K562 (cell line): ENCODE measurements at regions of chr6 and their contacts with region 1.

Region 1: GRCh38 chr6:44185953-44186634 is 27.5 kb downstream of the CAPN11 start:
- DNase-seq: peak in 2 of 4 experiments; percentile 22 to 23
- ATAC-seq: peak; percentile 59
- H3K4me3 ChIP-seq: no peak overlapping the region
- H3K27ac ChIP-seq: no peak overlapping the region
- H3K4me1 ChIP-seq: peaks cover 10 to 11% of the 10 kb centered on the region in 2 experiments; a peak in 3 of 5 replicates
- H3K27me3 ChIP-seq: no peaks in the 10 kb centered on the region
- CTCF ChIP-seq: no peak
- EP300 ChIP-seq: no peak
- POLR2A ChIP-seq: no peak
- RAD21 ChIP-seq: no peak

Region 2: DNA sequence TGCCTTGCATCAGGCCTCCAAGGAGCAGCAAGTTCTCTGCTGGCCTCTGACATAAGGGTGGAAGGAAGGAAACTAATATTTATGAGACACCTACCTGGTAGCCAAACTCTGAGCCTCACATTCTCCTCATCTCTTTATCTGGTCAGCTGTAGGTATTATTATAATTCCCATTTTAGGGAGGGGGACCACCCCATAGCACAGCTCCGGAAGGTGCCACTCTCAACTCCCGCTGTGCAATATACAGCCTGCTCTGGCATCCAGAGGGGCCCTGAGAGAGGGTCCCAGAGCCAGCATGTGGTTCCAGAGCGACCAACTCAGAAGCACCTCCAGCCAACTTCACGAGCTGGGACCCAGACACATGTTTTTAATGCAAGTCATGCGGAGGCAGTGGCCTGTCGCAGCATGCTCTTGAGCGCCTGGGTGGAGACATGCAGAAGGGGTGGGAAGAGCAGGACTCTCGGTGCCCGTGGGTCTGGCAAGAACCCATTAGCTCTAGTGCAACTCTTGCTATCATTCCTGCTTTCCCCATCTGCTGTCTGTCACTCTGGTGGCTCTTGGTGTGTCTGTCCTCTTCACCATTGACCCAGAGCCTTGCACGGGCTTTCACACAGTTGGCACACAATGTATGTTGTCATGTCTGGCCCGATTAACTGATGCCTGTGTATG is 15.7 kb after region 1 on chr6:
- CTCF ChIA-PET with region 1: no interaction called
- POLR2A ChIA-PET with region 1: interaction called, 10 read pairs
- in situ Hi-C with region 1: no loop called
- intact Hi-C with region 1: no loop called
- DNase-seq: peak; percentile 71 to 79 (median 73)
- ATAC-seq: peak; percentile 78
- H3K4me3 ChIP-seq: no peak overlapping the region
- H3K27ac ChIP-seq: peak overlapping the region; percentile 53; the same call in 2 of the 3 replicates
- H3K4me1 ChIP-seq: peaks cover 28 to 45% of the 10 kb centered on the region in 2 experiments
- H3K27me3 ChIP-seq: no peaks in the 10 kb centered on the region
- CTCF ChIP-seq: no peak
- EP300 ChIP-seq: no peak; the same call in 1 of the 2 replicates
- POLR2A ChIP-seq: 0 out of 2 replicates have a peak, but pooled peaks have one; percentile 39
- RAD21 ChIP-seq: no peak